HEK293T (cell line): ENCODE measurements at regions of chr1 and their contacts with region 1.

Region 1: DNA sequence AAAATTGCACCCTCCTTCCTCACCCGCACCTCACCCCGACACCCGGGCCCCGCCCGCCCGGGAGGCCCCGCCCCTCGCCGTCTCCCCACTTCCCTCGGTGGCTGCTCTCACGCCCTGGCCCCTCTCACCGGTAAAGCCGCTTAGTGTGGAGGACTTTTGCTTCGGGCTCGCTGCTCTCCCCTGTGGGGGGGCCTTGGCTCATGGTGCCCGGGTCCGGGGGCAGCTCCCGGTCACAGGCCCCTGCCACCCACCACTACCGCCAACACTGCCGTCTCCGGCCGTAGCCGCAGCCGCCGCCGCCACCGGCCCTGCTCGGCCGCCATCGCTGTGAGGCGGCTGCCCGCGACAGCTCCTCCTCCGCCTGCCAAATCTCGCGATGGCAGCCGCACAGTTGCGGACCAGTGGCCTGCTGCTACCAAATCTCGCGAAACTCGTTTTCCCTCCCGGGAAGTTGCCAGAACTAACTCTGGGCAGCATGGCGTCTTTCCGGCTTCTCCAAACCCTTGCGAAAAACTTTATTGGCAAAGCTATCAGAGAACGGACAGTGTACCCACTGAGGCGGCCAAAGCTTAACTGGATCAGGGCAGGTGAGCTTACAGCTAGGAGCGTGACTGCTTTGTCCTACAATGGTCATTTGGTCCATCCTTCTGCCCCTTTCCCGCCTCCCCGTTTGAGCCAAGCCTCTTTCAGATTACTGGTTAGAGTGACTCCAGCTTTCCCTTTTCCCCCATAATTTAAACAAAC is at the start of gene SMG5:
- DNase-seq: peak; percentile 100

Region 2: DNA sequence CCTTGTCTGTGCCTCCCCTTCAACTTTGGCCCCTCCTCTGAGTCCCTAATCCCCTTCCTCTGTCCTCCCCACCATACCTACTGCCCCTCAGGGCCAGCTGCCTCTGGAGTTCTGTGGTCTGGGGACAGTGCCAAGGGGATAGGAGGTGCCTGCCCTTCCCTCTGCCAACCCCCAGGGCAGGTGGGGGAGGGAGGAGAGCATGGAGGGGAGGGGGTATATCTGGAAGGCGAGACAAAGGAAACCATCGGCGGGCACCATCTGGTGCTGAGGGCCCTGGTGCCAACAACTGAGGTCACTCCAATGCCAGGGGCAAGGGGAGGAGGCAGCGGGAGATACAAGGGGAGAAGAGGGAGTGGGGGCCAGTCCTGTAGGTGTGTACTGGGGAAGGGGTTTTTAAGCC is 212.1 kb before region 1 on chr1:
- CTCF ChIA-PET with region 1: no interaction called
- POLR2A ChIA-PET with region 1: no interaction called
- DNase-seq: no peak

Region 3: DNA sequence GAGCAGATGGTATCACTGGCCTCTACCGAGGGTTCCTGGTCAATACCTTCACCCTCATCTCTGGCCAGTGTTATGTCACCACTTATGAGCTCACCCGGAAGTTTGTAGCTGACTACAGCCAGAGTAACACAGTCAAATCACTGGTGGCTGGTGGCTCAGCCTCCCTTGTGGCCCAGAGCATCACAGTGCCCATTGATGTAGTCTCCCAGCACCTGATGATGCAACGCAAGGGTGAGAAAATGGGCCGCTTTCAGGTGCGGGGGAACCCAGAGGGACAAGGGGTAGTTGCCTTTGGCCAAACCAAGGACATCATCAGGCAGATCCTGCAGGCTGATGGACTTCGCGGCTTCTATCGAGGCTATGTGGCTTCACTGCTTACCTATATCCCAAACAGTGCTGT is 82.6 kb before region 1 on chr1:
- CTCF ChIA-PET with region 1: no interaction called
- POLR2A ChIA-PET with region 1: no interaction called
- DNase-seq: no peak

Region 4: GRCh38 chr1:156270314-156270713 is 12.3 kb before region 1 on chr1:
- CTCF ChIA-PET with region 1: interaction called, 3 read pairs
- POLR2A ChIA-PET with region 1: interaction called, 34 read pairs
- DNase-seq: no peak

Region 5: GRCh38 chr1:156295391-156295947 is 12.8 kb after region 1 on chr1 and contains the start of gene GLMP:
- CTCF ChIA-PET with region 1: interaction called, 3 read pairs
- POLR2A ChIA-PET with region 1: interaction called, 71 read pairs
- DNase-seq: peak; percentile 76

Region 6: GRCh38 chr1:156359973-156360372 is 77.3 kb after region 1 on chr1:
- CTCF ChIA-PET with region 1: interaction called, 5 read pairs
- POLR2A ChIA-PET with region 1: interaction called, 10 read pairs
- DNase-seq: peak; percentile 73